ENCODE measurements at regions of chr1 and their contacts with region 1.

Region 1: GRCh38 chr1:102566182-102566581 is 542.1 kb downstream of the COL11A1 start:
- DNase-seq: no peak
- H3K4me3 ChIP-seq: no peak overlapping the region
- H3K27ac ChIP-seq: no peak overlapping the region
- H3K4me1 ChIP-seq: no peaks in the 10 kb centered on the region
- H3K27me3 ChIP-seq: no peaks in the 10 kb centered on the region
- CTCF ChIP-seq: no peak
- POLR2A ChIP-seq: no peak

Region 2: DNA sequence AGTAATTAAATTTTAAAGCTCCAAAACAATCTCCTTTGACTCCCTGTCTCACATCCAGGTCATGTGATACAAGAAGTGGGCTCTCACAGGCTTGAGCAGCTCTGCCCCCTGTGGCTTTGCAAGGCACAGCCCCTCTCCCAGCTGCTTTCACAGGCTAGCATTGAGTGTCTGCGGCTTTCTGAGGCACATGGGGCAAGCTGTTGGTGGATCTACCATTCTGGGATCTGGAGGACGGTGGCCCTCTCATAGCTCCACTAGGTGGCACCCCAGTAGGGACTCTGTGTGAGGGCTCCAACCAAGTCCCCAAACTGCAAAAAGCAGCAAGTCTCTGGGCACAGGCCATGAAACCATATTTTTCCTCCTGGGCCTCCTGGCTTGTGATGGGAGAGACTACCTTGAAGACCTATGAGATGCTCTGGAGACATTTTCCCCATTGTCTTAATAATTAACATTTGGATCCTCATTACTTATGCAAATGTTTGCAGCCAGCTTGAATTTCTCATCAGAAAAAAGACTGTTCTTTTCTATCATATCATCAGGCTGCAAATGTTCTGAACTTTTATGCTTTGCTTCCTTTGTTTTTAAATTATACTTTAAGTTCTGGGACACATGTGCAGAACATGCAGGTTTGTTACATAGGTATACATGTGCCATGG is 15.3 kb before region 1 on chr1:
- intact Hi-C with region 1: loop called (anchors 1 kb)
- DNase-seq: no peak
- H3K4me3 ChIP-seq: no peak overlapping the region
- H3K27ac ChIP-seq: no peak overlapping the region
- H3K4me1 ChIP-seq: no peaks in the 10 kb centered on the region
- H3K27me3 ChIP-seq: no peaks in the 10 kb centered on the region
- CTCF ChIP-seq: peak in 1 of 3 donors; percentile 14
- POLR2A ChIP-seq: no peak

Measured in breast epithelium (tissue), 4 donors.